Activated CD4-positive, alpha-beta memory T cell treated with anti-CD3 and anti-CD28 coated beads for 36 hours (primary cell): ENCODE measurements at regions of chr4 and their contacts with region 1.

Region 1: DNA sequence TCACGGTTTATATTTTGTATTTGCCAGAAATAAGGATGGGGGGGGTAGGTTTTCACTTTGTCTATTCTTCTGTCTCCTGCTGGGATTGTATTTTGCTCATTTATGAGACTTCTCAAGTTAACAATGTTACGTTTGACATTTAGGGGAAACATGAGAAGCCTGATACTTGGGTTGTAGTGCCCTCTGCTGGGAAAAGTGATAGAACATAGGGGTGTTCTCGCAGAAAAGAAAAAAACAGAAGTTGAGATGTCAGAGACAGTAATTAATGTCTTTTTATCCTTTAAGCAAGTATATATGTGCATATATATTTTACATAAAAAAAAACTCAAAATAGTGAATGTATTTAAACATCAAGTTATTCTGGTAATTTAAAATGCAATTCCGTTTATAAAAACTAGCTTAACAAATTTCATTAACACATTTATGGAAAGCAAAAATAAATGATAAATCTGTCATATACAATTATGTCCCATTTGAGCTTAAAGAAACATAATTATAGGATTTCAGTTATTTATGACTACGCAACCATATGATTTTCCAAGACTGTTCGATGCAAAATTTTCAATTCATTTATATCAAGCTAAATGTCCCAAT is 46.0 kb upstream of the TMPRSS11F start:
- DNase-seq: peak; percentile 38
- H3K4me3 Mint-ChIP-seq: no peak overlapping the region
- H3K27ac Mint-ChIP-seq: no peak overlapping the region
- H3K4me1 Mint-ChIP-seq: no peaks in the 10 kb centered on the region
- H3K27me3 Mint-ChIP-seq: peaks cover 6% of the 10 kb centered on the region

Region 2: GRCh38 chr4:67746797-67747495 is 428.7 kb before region 1 on chr4:
- CTCF ChIA-PET with region 1: interaction called, 4 read pairs
- POLR2A ChIA-PET with region 1: no interaction called
- intact Hi-C with region 1: loop called (anchors 10 kb)
- DNase-seq: no peak
- H3K4me3 Mint-ChIP-seq: no peak overlapping the region
- H3K27ac Mint-ChIP-seq: no peak overlapping the region
- H3K4me1 Mint-ChIP-seq: peaks cover 9% of the 10 kb centered on the region
- H3K27me3 Mint-ChIP-seq: no peaks in the 10 kb centered on the region

Region 3: DNA sequence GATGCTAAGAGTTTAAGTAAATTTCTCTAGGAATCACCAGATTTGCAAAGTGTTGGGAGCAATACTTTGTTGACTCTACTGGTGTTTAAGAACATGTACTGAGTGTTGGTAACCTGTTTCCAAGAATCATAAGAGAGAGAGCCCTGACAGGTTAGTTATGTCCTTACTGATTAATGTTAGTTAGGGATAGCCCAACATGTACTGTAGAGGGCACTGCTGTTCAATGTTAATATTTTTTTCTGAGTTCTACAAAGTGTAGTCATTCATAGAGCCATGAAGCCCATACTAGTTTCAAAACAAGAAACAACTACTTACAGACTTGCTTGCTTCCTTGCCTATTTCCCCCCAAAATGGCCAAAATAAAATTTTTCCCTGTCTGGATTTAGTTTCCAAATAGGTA is 303.8 kb before region 1 on chr4:
- CTCF ChIA-PET with region 1: no interaction called
- POLR2A ChIA-PET with region 1: no interaction called
- intact Hi-C with region 1: loop called (anchors 1 kb)
- DNase-seq: no peak
- H3K4me3 Mint-ChIP-seq: no peak overlapping the region
- H3K27ac Mint-ChIP-seq: no peak overlapping the region
- H3K4me1 Mint-ChIP-seq: no peaks in the 10 kb centered on the region
- H3K27me3 Mint-ChIP-seq: no peaks in the 10 kb centered on the region

Region 4: GRCh38 chr4:67983333-67983732 is 192.3 kb before region 1 on chr4:
- CTCF ChIA-PET with region 1: interaction called, 11 read pairs
- POLR2A ChIA-PET with region 1: no interaction called
- intact Hi-C with region 1: loop called (anchors 1 kb)
- DNase-seq: no peak
- H3K4me3 Mint-ChIP-seq: no peak overlapping the region
- H3K27ac Mint-ChIP-seq: no peak overlapping the region
- H3K4me1 Mint-ChIP-seq: no peaks in the 10 kb centered on the region
- H3K27me3 Mint-ChIP-seq: peaks cover 2% of the 10 kb centered on the region

Region 5: GRCh38 chr4:67988991-67989390 is 186.7 kb before region 1 on chr4:
- CTCF ChIA-PET with region 1: interaction called, 11 read pairs
- POLR2A ChIA-PET with region 1: no interaction called
- intact Hi-C with region 1: loop called (anchors 1 kb)
- DNase-seq: no peak
- H3K4me3 Mint-ChIP-seq: no peak overlapping the region
- H3K27ac Mint-ChIP-seq: no peak overlapping the region
- H3K4me1 Mint-ChIP-seq: no peaks in the 10 kb centered on the region
- H3K27me3 Mint-ChIP-seq: peaks cover 2% of the 10 kb centered on the region

Region 6: GRCh38 chr4:68011684-68012083 is 164.0 kb before region 1 on chr4:
- CTCF ChIA-PET with region 1: no interaction called
- POLR2A ChIA-PET with region 1: no interaction called
- intact Hi-C with region 1: no loop called
- DNase-seq: no peak
- H3K4me3 Mint-ChIP-seq: no peak overlapping the region
- H3K27ac Mint-ChIP-seq: no peak overlapping the region
- H3K4me1 Mint-ChIP-seq: no peaks in the 10 kb centered on the region
- H3K27me3 Mint-ChIP-seq: no peaks in the 10 kb centered on the region

Region 7: GRCh38 chr4:68129793-68130192 is 45.9 kb before region 1 on chr4 and contains the start of gene TMPRSS11F:
- CTCF ChIA-PET with region 1: no interaction called
- POLR2A ChIA-PET with region 1: no interaction called
- intact Hi-C with region 1: no loop called
- DNase-seq: no peak
- H3K4me3 Mint-ChIP-seq: no peak within 1 kb of the TSS
- H3K27ac Mint-ChIP-seq: no peak within 1 kb of the TSS
- H3K4me1 Mint-ChIP-seq: no peaks in the 10 kb centered on the region
- H3K27me3 Mint-ChIP-seq: peaks cover 2% of the 10 kb centered on the region
- total RNA-seq, gene TMPRSS11F: not detected